GM13976 (cell line): ENCODE measurements at regions of chr14 and their contacts with region 1.

Region 1: GRCh38 chr14:62126879-62127478 is 364.8 kb downstream of the SNAPC1 start:
- DNase-seq: peak; percentile 30
- CTCF ChIP-seq: peak; percentile 62

Region 2: DNA sequence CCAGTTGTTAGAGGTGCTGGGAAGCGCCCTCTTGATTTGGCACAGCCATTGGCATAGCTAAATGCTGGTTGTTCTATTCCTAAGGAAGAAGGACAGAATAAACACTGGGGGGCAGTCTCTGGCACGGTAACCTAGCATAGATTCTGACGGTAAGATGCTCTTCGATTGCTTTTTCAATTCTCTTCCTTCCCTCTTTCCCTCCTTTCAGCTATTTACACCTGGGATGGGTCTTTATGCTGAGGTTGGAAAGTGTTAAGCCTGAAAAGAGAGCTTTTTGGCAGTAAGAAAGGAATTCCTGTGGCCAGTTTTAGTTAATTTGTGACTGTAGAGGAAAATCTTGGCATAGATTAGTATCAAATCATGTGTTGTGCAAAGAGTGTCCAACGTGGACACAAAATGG is 201.9 kb before region 1 on chr14:
- in situ Hi-C with region 1: loop called (anchors 10 kb)
- DNase-seq: peak; percentile 21
- CTCF ChIP-seq: peak; percentile 45

Region 3: DNA sequence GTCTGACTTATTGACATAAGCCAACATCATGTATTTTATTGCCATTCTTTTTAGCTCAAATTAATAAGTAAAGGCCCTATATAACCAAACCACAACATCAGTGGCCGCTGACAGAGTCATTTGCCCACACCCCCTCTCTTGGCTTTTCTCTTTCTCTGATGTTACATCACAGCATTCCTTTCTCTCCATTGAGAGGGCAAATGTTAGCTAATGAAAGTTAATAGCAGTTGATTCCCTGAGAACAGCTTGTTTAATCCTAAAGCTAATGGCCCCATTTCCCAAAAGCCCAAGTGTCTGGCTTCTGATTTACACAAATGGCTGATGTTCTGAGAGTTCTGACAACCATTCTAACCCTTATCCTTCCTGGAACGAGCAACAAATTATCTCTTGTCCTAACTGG is 55.9 kb before region 1 on chr14:
- in situ Hi-C with region 1: no loop called
- DNase-seq: no peak
- CTCF ChIP-seq: no peak